Gastrocnemius medialis (tissue), 4 donors: ENCODE measurements at regions of chr10 and their contacts with region 1.

Region 1: GRCh38 chr10:27155066-27155754 is at the start of gene MASTL:
- DNase-seq: peak; percentile 79 to 89
- ATAC-seq: peak; percentile 85 to 87
- H3K4me3 ChIP-seq: peak within 1 kb of the TSS; percentile 65 to 99 (median 92)
- H3K27ac ChIP-seq: peak within 1 kb of the TSS; percentile 89 to 99 (median 95)
- H3K4me1 ChIP-seq: peaks cover 12 to 22% of the 10 kb centered on the region in 2 donors
- H3K27me3 ChIP-seq: no peaks in the 10 kb centered on the region
- CTCF ChIP-seq: no peak
- POLR2A ChIP-seq: peak; percentile 89 to 92
- total RNA-seq, gene MASTL: 2.0 to 3.6 (median 2.9) TPM

Region 2: DNA sequence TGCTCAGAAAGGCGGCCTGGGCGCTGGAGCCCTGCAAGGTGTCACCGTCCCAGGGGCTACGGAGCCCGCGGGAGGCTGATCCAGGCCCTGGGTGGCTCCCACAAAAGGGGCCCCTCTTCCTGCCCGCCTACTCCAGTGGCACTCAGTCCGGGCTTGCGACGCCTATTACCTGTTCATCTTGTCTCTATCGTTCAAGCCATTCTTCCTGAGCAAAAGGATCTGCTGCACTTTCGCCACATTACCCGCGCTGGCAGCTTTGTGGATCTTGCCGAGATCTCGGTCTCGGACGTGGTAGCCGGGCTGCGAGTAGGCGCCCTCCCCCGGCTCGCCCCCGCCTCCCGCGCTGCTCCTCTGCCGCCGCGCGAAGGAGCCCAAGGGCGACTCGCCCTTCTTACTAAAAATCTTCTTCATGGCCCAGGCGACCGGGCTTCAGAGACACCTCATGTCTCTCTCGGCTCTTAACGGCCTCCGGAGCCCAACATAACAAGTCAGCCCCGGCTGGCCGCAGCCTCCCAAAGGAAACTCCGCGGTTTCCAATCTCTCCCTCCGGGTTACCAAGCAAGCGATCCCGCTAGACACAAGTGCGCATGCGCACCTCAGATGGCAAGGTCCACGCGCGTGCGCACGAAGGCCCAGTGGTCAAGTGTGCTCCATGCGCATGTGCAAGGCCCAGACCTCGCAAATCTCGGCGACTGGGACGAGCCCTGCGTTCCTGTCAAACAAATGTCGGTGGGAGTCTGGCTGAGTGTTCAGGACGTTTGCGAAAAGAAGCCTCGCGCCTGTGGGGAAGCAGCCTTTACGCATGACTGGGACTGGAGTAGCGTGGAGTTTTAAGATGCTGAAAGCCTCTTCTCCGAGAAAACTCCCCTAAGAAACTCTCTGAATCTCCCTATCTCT is 55.0 kb before region 1 on chr10 and contains the start of gene ANKRD26:
- in situ Hi-C with region 1: no loop called
- intact Hi-C with region 1: loop called (anchors 1 kb)
- DNase-seq: peak; percentile 95 to 97
- ATAC-seq: peak; percentile 99 to 100
- H3K4me3 ChIP-seq: peak within 1 kb of the TSS; percentile 77 to 88 (median 86)
- H3K27ac ChIP-seq: peak within 1 kb of the TSS; percentile 88 to 93 (median 88)
- H3K4me1 ChIP-seq: peaks cover 12 to 15% of the 10 kb centered on the region in 2 donors
- H3K27me3 ChIP-seq: no peaks in the 10 kb centered on the region
- CTCF ChIP-seq: peak in 1 of 5 experiments; percentile 14
- POLR2A ChIP-seq: peak; percentile 57 to 63
- total RNA-seq, gene ANKRD26: 3.6 to 14.7 (median 8.4) TPM

Region 3: DNA sequence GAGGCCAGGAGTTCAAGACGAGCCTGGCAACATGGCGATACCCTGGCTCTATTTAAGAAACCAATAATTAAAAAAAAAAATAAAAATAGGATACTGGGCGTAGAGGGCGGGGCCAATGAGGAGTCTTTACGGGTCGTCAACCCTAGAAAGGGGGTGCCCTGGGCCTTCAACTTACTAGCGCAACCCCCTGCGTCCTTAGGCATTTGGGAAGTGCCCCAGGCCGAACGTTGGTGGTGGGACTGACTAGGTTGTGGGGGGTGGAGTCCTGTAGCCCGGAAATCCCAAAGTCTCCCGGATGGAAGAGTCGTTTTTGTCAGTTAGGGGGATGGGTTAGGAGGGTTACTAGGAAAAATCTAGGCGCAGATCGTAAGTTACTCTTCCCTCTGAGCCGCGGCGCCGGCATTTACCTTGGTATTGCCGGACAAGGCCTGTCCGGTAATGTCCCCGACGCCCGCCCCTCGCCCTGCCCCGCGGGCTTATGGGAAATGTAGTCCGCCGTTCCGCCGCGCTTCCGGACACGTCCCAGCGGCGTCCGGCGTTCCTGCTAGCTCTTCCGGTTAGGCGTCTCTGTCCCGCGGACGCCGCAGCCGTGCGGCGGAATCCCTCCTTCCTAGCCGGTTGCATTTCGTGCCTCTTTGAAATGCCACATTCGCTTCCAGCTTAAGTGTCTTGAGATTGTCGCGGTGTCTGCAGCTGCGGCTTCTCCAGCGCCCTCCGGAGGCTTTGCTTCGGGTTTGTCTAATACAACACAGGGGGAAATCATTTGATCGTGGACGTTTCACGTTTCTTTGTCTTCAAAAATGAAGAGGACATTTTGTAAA is 86.7 kb after region 1 on chr10:
- in situ Hi-C with region 1: loop called in 1 of 4 experiments (anchors 10 kb)
- intact Hi-C with region 1: loop called (anchors 1 kb)
- DNase-seq: peak; percentile 86 to 88
- ATAC-seq: peak; percentile 83 to 84
- H3K4me3 ChIP-seq: peak overlapping the region; percentile 62 to 98 (median 83)
- H3K27ac ChIP-seq: peak overlapping the region; percentile 95 to 98 (median 98)
- H3K4me1 ChIP-seq: peaks cover 12 to 13% of the 10 kb centered on the region in 2 donors
- H3K27me3 ChIP-seq: no peaks in the 10 kb centered on the region
- CTCF ChIP-seq: peak; percentile 28 to 60 (median 39)
- POLR2A ChIP-seq: peak; percentile 95 to 96